ENCODE measurements at regions of chr9 and their contacts with region 1.

Region 1: DNA sequence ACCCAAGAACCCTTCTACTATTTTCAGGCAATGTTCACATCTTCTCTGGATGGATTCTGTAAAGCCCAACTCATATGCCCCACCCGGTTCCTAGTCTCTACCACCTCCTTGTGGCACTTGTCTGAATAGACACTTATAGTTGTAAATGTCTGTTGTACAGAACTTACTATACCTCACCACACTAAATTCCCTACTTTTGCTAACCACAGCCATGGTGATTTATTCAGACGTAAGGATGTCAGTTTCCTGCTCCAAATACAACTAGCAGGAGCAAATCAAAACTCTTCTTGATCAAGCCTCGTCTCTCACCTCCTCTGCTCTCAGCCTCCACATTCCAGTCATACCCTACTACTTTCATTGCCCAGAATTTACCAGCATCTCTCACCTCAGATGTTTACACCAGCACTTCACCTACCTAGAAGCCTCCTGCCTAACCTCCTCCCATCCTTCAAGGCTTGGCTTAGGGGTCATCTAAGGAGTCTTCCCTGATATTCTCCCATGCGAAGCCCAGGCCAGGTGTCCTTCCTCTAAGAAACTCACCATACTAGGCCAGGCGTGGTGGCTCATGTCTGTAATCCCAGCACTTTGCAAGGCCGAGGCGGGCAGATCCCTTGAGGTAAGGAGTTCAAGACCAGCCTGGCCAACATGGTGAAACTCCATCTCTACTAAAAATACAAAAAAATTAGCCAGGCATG is 75.5 kb downstream of the MAPKAP1 start:
- DNase-seq: peak in 1 of 2 donors; percentile 55
- ATAC-seq: peak; percentile 61 to 80 (median 70)
- H3K4me3 ChIP-seq: no peak overlapping the region
- H3K4me3 Mint-ChIP-seq: peak overlapping the region; percentile 10
- H3K27ac ChIP-seq: no peak overlapping the region
- H3K27ac Mint-ChIP-seq: peak overlapping the region; percentile 32 to 56
- H3K4me1 ChIP-seq: peaks cover 26% of the 10 kb centered on the region
- H3K4me1 Mint-ChIP-seq: peaks cover 55 to 72% of the 10 kb centered on the region in 2 donors
- H3K27me3 ChIP-seq: no peaks in the 10 kb centered on the region
- H3K27me3 Mint-ChIP-seq: no peaks in the 10 kb centered on the region
- CTCF ChIP-seq: peak; percentile 50

Region 2: GRCh38 chr9:125407974-125408900 is 223.3 kb before region 1 on chr9:
- intact Hi-C with region 1: loop called (anchors 2 kb)
- DNase-seq: peak; percentile 60 to 85
- ATAC-seq: peak; percentile 74 to 84 (median 83)
- H3K4me3 ChIP-seq: peak overlapping the region; percentile 33
- H3K4me3 Mint-ChIP-seq: peak overlapping the region; percentile 87
- H3K27ac ChIP-seq: no peak overlapping the region
- H3K27ac Mint-ChIP-seq: no peak overlapping the region
- H3K4me1 ChIP-seq: peaks cover 13% of the 10 kb centered on the region
- H3K4me1 Mint-ChIP-seq: peaks cover 6 to 20% of the 10 kb centered on the region in 2 donors
- H3K27me3 ChIP-seq: peaks cover 7% of the 10 kb centered on the region
- H3K27me3 Mint-ChIP-seq: peaks cover 14 to 28% of the 10 kb centered on the region in 2 donors
- CTCF ChIP-seq: peak; percentile 73

Region 3: DNA sequence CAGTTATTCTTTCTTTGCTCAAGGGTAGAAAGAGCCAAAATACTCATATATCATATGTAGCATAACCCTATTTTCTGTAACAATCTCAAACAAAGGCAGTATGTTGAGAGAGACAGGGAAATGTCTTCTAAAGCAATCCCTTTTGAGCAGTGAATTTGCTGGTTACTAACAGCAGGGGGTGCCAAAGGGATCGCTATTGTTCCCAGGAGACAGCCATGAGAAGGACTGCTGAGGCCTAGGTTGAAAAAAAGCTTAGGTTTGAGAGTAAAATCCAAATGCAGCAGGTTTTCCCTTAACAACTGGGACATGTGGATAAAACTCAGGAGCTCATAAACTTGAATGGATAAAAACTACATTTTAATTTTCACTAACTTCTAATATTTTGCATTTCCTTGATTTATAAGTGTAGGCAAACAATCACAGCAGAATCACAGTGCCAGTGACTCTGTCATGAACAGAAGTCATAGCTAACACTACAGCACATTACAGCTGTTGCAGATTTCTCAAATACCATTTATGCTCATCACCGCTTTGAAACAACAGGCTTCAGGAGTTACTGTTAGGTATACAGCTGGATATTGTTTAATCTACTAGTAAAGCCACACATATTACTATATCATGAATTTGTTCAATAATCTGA is 73.0 kb before region 1 on chr9:
- intact Hi-C with region 1: loop called (anchors 1 kb)
- DNase-seq: peak; percentile 25 to 77
- ATAC-seq: peak; percentile 63 to 84 (median 75)
- H3K4me3 ChIP-seq: no peak overlapping the region
- H3K4me3 Mint-ChIP-seq: no peak overlapping the region
- H3K27ac ChIP-seq: no peak overlapping the region
- H3K27ac Mint-ChIP-seq: no peak overlapping the region
- H3K4me1 ChIP-seq: no peaks in the 10 kb centered on the region
- H3K4me1 Mint-ChIP-seq: peaks cover 12 to 16% of the 10 kb centered on the region in 2 donors
- H3K27me3 ChIP-seq: no peaks in the 10 kb centered on the region
- H3K27me3 Mint-ChIP-seq: no peaks in the 10 kb centered on the region
- CTCF ChIP-seq: peak; percentile 73

Measured in natural killer cell (primary cell).